ENCODE measurements at regions of chr16 and their contacts with region 1.

Region 1: GRCh38 chr16:55465077-55465896 is 13.7 kb upstream of the MMP2 start:
- DNase-seq: peak; percentile 91
- ATAC-seq: peak; percentile 99
- H3K4me3 Mint-ChIP-seq: no peak overlapping the region
- H3K27ac Mint-ChIP-seq: no peak overlapping the region
- H3K4me1 Mint-ChIP-seq: no peaks in the 10 kb centered on the region
- H3K27me3 Mint-ChIP-seq: peaks cover 2% of the 10 kb centered on the region
- CTCF ChIP-seq: peak; percentile 99

Region 2: DNA sequence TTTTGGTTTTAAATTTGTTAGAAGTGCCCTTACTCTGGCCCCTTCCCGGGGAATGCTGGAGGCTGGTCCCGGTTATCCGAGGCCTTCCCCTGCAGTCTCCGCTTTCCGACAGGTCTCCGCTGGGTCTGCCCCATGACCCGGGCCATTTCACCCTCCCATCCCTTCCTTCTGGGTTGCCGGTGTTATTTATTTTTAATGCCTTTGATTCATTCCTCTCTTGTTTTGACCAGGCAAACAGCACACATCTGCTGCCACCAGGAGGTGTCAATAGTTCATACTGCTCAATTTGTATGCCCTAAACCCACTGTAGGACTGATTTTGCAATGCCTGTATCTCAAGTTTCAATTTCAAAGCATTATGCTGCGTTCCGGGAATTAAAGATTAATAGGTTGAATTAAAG is 647.8 kb before region 1 on chr16:
- CTCF ChIA-PET with region 1: no interaction called
- POLR2A ChIA-PET with region 1: no interaction called
- intact Hi-C with region 1: no loop called
- DNase-seq: no peak
- ATAC-seq: no peak
- H3K4me3 Mint-ChIP-seq: no peak overlapping the region
- H3K27ac Mint-ChIP-seq: no peak overlapping the region
- H3K4me1 Mint-ChIP-seq: no peaks in the 10 kb centered on the region
- H3K27me3 Mint-ChIP-seq: peaks cover 12% of the 10 kb centered on the region
- CTCF ChIP-seq: no peak

Region 3: GRCh38 chr16:55333684-55334083 is 131.6 kb before region 1 on chr16:
- CTCF ChIA-PET with region 1: no interaction called
- POLR2A ChIA-PET with region 1: no interaction called
- intact Hi-C with region 1: no loop called
- DNase-seq: no peak
- ATAC-seq: no peak
- H3K4me3 Mint-ChIP-seq: no peak overlapping the region
- H3K27ac Mint-ChIP-seq: no peak overlapping the region
- H3K4me1 Mint-ChIP-seq: peaks cover 4% of the 10 kb centered on the region
- H3K27me3 Mint-ChIP-seq: peaks cover 47% of the 10 kb centered on the region
- CTCF ChIP-seq: no peak

Region 4: GRCh38 chr16:55454861-55455260 is 10.4 kb before region 1 on chr16:
- CTCF ChIA-PET with region 1: interaction called, 19 read pairs
- POLR2A ChIA-PET with region 1: no interaction called
- intact Hi-C with region 1: no loop called
- DNase-seq: no peak
- ATAC-seq: no peak
- H3K4me3 Mint-ChIP-seq: no peak overlapping the region
- H3K27ac Mint-ChIP-seq: no peak overlapping the region
- H3K4me1 Mint-ChIP-seq: no peaks in the 10 kb centered on the region
- H3K27me3 Mint-ChIP-seq: peaks cover 3% of the 10 kb centered on the region
- CTCF ChIP-seq: no peak

Region 5: DNA sequence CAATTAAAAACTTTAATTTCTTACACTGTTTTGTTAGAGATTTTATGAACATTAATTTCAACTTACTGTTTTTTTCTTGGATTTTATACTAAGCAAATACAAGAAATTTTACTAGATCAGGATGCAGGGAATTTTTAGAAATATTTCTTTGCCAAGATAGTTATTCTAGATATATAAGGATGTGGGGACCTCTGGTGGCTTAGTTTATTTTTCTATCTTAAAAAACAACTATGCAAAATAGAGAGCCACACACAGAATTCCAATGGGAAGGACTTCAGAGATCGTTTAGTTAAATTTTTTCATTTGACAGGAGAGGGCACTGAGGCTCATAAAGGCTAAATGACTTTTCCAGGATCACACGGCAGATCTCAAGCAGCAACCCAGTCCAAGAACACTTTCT is 78.2 kb after region 1 on chr16:
- CTCF ChIA-PET with region 1: interaction called, 17 read pairs
- POLR2A ChIA-PET with region 1: no interaction called
- intact Hi-C with region 1: loop called (anchors 2 kb)
- DNase-seq: no peak
- ATAC-seq: no peak
- H3K4me3 Mint-ChIP-seq: no peak overlapping the region
- H3K27ac Mint-ChIP-seq: no peak overlapping the region
- H3K4me1 Mint-ChIP-seq: no peaks in the 10 kb centered on the region
- H3K27me3 Mint-ChIP-seq: no peaks in the 10 kb centered on the region
- CTCF ChIP-seq: no peak

Region 6: GRCh38 chr16:55701442-55702319 is 236.4 kb after region 1 on chr16:
- CTCF ChIA-PET with region 1: interaction called, 121 read pairs
- POLR2A ChIA-PET with region 1: no interaction called
- intact Hi-C with region 1: loop called (anchors 1 kb)
- DNase-seq: peak; percentile 57
- ATAC-seq: peak; percentile 76
- H3K4me3 Mint-ChIP-seq: no peak overlapping the region
- H3K27ac Mint-ChIP-seq: no peak overlapping the region
- H3K4me1 Mint-ChIP-seq: peaks cover 6% of the 10 kb centered on the region
- H3K27me3 Mint-ChIP-seq: peaks cover 3% of the 10 kb centered on the region
- CTCF ChIP-seq: peak; percentile 37

Region 7: GRCh38 chr16:55842369-55843104 is 377.2 kb after region 1 on chr16:
- CTCF ChIA-PET with region 1: interaction called, 39 read pairs
- POLR2A ChIA-PET with region 1: no interaction called
- intact Hi-C with region 1: loop called (anchors 5 kb)
- DNase-seq: peak; percentile 25
- ATAC-seq: peak; percentile 45
- H3K4me3 Mint-ChIP-seq: no peak overlapping the region
- H3K27ac Mint-ChIP-seq: no peak overlapping the region
- H3K4me1 Mint-ChIP-seq: no peaks in the 10 kb centered on the region
- H3K27me3 Mint-ChIP-seq: peaks cover 15% of the 10 kb centered on the region
- CTCF ChIP-seq: peak; percentile 80

Region 8: DNA sequence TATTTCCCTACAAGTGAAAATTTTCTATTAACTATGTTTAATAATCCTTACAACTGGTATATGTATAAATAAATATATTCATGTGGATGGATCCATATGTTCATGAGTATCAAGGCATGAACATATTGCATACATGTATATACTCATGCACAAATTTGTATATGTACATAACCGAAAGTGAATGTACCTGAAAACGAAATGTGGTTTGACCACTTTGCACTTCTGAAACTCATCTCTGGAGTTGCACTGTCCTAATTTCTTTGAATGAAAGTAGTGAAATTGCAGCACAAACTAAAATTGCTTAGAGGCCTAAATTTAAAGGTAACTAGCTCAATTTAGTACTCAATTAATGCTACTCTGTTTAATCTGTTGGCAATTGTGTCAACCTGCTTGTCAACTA is 698.7 kb after region 1 on chr16:
- CTCF ChIA-PET with region 1: no interaction called
- POLR2A ChIA-PET with region 1: no interaction called
- intact Hi-C with region 1: no loop called
- DNase-seq: no peak
- ATAC-seq: no peak
- H3K4me3 Mint-ChIP-seq: no peak overlapping the region
- H3K27ac Mint-ChIP-seq: no peak overlapping the region
- H3K4me1 Mint-ChIP-seq: peaks cover 2% of the 10 kb centered on the region
- H3K27me3 Mint-ChIP-seq: peaks cover 5% of the 10 kb centered on the region
- CTCF ChIP-seq: no peak

Measured in activated CD8-positive, alpha-beta T cell treated with anti-CD3 and anti-CD28 coated beads for 36 hours (primary cell).